Caco-2 (cell line): ENCODE measurements at regions of chr14 and their contacts with region 1.

Region 1: GRCh38 chr14:69129264-69129880 is 23.5 kb downstream of the DCAF5 start:
- DNase-seq: peak; percentile 64 to 72
- H3K4me3 ChIP-seq: no peak overlapping the region
- H3K4me3 Mint-ChIP-seq: no peak overlapping the region
- H3K27ac Mint-ChIP-seq: no peak overlapping the region
- H3K4me1 ChIP-seq: no peaks in the 10 kb centered on the region; the same call in 1 of the 2 replicates
- H3K4me1 Mint-ChIP-seq: peaks cover 13% of the 10 kb centered on the region
- H3K27me3 ChIP-seq: no peaks in the 10 kb centered on the region
- H3K27me3 Mint-ChIP-seq: no peaks in the 10 kb centered on the region
- CTCF ChIP-seq: peak; percentile 91 to 93

Region 2: GRCh38 chr14:69059658-69060623 is 69.4 kb before region 1 on chr14:
- CTCF ChIA-PET with region 1: no interaction called
- POLR2A ChIA-PET with region 1: no interaction called
- intact Hi-C with region 1: no loop called
- DNase-seq: no peak
- H3K4me3 ChIP-seq: no peak overlapping the region
- H3K4me3 Mint-ChIP-seq: no peak overlapping the region
- H3K27ac Mint-ChIP-seq: no peak overlapping the region
- H3K4me1 ChIP-seq: 0 out of 2 replicates have a peak, but pooled peaks cover 8% of the 10 kb centered on the region
- H3K4me1 Mint-ChIP-seq: peaks cover 6% of the 10 kb centered on the region
- H3K27me3 ChIP-seq: no peaks in the 10 kb centered on the region
- H3K27me3 Mint-ChIP-seq: no peaks in the 10 kb centered on the region
- CTCF ChIP-seq: peak in 1 of 2 experiments; percentile 11

Region 3: GRCh38 chr14:69153131-69153872 is 23.9 kb after region 1 on chr14:
- CTCF ChIA-PET with region 1: interaction called, 17 read pairs
- POLR2A ChIA-PET with region 1: no interaction called
- intact Hi-C with region 1: loop called (anchors 1 kb)
- DNase-seq: peak; percentile 93 to 97
- H3K4me3 ChIP-seq: peak overlapping the region; percentile 87
- H3K4me3 Mint-ChIP-seq: peak overlapping the region; percentile 89
- H3K27ac Mint-ChIP-seq: peak overlapping the region; percentile 87
- H3K4me1 ChIP-seq: 0 out of 2 replicates have a peak, but pooled peaks cover 14% of the 10 kb centered on the region
- H3K4me1 Mint-ChIP-seq: peaks cover 12% of the 10 kb centered on the region
- H3K27me3 ChIP-seq: no peaks in the 10 kb centered on the region
- H3K27me3 Mint-ChIP-seq: no peaks in the 10 kb centered on the region
- CTCF ChIP-seq: no peak

Region 4: GRCh38 chr14:69191340-69192111 is 62.2 kb after region 1 on chr14 and contains the start of gene EXD2:
- CTCF ChIA-PET with region 1: interaction called, 4 read pairs
- POLR2A ChIA-PET with region 1: no interaction called
- intact Hi-C with region 1: loop called (anchors 1 kb)
- DNase-seq: peak; percentile 94 to 95
- H3K4me3 ChIP-seq: peak within 1 kb of the TSS; percentile 78
- H3K4me3 Mint-ChIP-seq: peak within 1 kb of the TSS; percentile 93
- H3K27ac Mint-ChIP-seq: peak within 1 kb of the TSS; percentile 96
- H3K4me1 ChIP-seq: peaks cover 8% of the 10 kb centered on the region; the same call in 1 of the 2 replicates
- H3K4me1 Mint-ChIP-seq: no peaks in the 10 kb centered on the region
- H3K27me3 ChIP-seq: no peaks in the 10 kb centered on the region
- H3K27me3 Mint-ChIP-seq: no peaks in the 10 kb centered on the region
- CTCF ChIP-seq: no peak
- total RNA-seq, gene EXD2: 22.5 and 23.9 TPM in 2 replicates

Region 5: DNA sequence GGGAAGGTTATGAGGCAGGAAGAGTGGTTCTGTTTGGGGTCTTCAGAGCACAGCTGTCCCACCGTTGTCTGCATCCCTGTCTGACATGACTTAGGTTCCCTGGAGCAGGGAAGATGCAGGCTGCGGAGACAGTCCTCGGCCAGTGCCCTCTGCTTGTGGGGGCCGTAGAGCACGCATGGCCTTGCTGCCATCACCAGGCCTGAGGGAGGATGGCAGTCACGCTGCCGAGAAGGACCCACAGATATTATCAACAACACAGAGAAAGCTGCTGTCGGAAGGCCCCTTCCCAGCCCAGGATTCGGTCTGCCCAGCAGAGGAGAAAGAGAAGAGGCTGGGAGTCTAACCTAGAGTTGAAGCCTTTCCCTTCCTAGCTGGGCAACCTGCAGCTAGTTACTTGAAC is 233.7 kb after region 1 on chr14:
- CTCF ChIA-PET with region 1: no interaction called
- POLR2A ChIA-PET with region 1: no interaction called
- intact Hi-C with region 1: loop called (anchors 10 kb)
- DNase-seq: peak in 1 of 2 experiments; percentile 38
- H3K4me3 ChIP-seq: no peak overlapping the region
- H3K4me3 Mint-ChIP-seq: no peak overlapping the region
- H3K27ac Mint-ChIP-seq: no peak overlapping the region
- H3K4me1 ChIP-seq: no peaks in the 10 kb centered on the region
- H3K4me1 Mint-ChIP-seq: no peaks in the 10 kb centered on the region
- H3K27me3 ChIP-seq: no peaks in the 10 kb centered on the region
- H3K27me3 Mint-ChIP-seq: no peaks in the 10 kb centered on the region
- CTCF ChIP-seq: peak in 1 of 2 experiments; percentile 58

Region 6: GRCh38 chr14:69460093-69460701 is 330.8 kb after region 1 on chr14:
- CTCF ChIA-PET with region 1: no interaction called
- POLR2A ChIA-PET with region 1: no interaction called
- intact Hi-C with region 1: loop called (anchors 1 kb)
- DNase-seq: peak; percentile 49 to 66
- H3K4me3 ChIP-seq: no peak overlapping the region
- H3K4me3 Mint-ChIP-seq: no peak overlapping the region
- H3K27ac Mint-ChIP-seq: no peak overlapping the region
- H3K4me1 ChIP-seq: no peaks in the 10 kb centered on the region
- H3K4me1 Mint-ChIP-seq: no peaks in the 10 kb centered on the region
- H3K27me3 ChIP-seq: no peaks in the 10 kb centered on the region
- H3K27me3 Mint-ChIP-seq: no peaks in the 10 kb centered on the region
- CTCF ChIP-seq: peak; percentile 69 to 77